ENCODE measurements at regions of chr17 and their contacts with region 1.

Region 1: GRCh38 chr17:58577642-58578091 is 63.2 kb upstream of the MTMR4 start:
- DNase-seq: peak; percentile 15 to 64 (median 30)
- H3K4me3 ChIP-seq: no peak overlapping the region
- H3K4me3 Mint-ChIP-seq: peak overlapping the region in 1 of 7 donors; percentile 29
- H3K27ac ChIP-seq: no peak overlapping the region
- H3K27ac Mint-ChIP-seq: no peak overlapping the region
- H3K4me1 ChIP-seq: no peaks in the 10 kb centered on the region
- H3K4me1 Mint-ChIP-seq: peaks cover 0 to 3% (median 0%) of the 10 kb centered on the region in 3 donors
- H3K27me3 ChIP-seq: no peaks in the 10 kb centered on the region
- H3K27me3 Mint-ChIP-seq: peaks cover 3 to 5% of the 10 kb centered on the region in 2 donors

Region 2: DNA sequence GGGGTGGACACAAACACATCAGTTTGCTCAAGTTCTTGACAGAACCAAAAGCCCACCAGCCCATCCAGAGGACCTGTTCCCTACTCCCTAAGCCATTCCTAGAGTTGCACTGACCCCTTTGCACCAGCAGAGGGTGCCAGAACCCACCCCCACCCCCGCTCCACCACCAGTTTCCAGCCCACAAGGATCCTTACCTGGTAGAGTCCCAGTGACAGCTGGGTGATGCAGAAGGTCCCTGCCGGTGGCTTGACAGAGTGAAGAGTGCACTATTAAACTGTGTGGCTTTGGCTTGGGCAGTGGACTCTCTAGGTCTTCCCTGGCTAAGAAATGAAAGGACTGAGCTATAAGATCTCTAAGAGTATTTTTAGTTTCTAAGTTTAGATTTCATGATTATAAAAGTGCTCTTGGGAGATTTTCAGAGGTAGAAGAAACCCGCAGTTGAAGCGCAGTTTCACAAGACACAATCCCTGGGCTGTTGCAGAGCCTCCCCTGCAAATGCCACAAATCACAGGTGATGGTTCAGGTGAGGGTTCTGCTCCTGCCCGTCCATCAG is 10.1 kb after region 1 on chr17:
- CTCF ChIA-PET with region 1: interaction called, 12 read pairs
- POLR2A ChIA-PET with region 1: no interaction called
- DNase-seq: peak; percentile 32 to 70 (median 36)
- H3K4me3 ChIP-seq: no peak overlapping the region
- H3K4me3 Mint-ChIP-seq: peak overlapping the region in 1 of 7 donors; percentile 41
- H3K27ac ChIP-seq: no peak overlapping the region
- H3K27ac Mint-ChIP-seq: peak overlapping the region in 2 of 8 donors; percentile 23 to 24
- H3K4me1 ChIP-seq: no peaks in the 10 kb centered on the region
- H3K4me1 Mint-ChIP-seq: peaks cover 0 to 5% (median 4%) of the 10 kb centered on the region in 3 donors
- H3K27me3 ChIP-seq: no peaks in the 10 kb centered on the region
- H3K27me3 Mint-ChIP-seq: peaks cover 0 to 11% of the 10 kb centered on the region in 2 donors

Region 3: DNA sequence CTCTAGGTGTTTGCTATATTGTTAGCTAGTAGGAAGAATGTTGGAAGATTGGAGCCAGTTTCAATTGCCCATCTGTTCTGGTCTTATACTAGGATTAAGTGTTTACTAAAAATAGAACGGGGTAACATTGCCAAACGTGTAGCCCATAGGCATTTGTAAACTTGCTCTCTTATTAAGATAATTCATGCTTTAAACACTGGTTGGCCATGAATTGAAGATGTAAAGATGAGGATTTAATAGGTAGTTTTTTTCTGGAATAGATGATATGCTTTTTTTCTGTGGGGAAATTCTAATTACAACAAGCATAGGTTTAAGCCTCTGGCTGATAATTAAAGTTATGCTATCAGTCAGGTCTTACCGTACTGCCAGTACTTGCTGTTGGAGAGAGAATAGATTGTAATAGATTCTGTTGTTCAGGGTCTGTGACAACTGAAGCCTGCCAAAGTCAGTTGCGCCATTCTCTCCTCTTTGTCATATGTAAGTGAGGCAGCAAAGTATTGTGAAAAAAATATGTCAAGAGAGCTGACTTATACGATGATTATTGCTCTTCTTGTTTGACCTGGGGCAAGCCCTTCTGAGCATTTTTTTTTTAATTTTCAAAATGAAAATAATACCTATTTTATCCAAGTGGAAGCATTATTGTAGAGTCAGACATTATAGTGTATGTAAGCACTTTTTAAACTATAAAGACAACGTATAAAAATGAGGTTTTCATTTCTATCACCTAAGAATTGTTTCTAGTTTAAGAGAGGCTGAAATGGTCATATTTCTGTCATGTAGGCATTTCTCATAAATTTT is 245.0 kb after region 1 on chr17:
- CTCF ChIA-PET with region 1: no interaction called
- POLR2A ChIA-PET with region 1: no interaction called
- DNase-seq: no peak
- H3K4me3 ChIP-seq: no peak overlapping the region
- H3K4me3 Mint-ChIP-seq: no peak overlapping the region
- H3K27ac ChIP-seq: no peak overlapping the region
- H3K27ac Mint-ChIP-seq: no peak overlapping the region
- H3K4me1 ChIP-seq: no peaks in the 10 kb centered on the region
- H3K4me1 Mint-ChIP-seq: no peaks in the 10 kb centered on the region
- H3K27me3 ChIP-seq: no peaks in the 10 kb centered on the region
- H3K27me3 Mint-ChIP-seq: peaks cover 2 to 20% of the 10 kb centered on the region in 2 donors

Region 4: GRCh38 chr17:59004338-59005111 is 426.9 kb after region 1 on chr17:
- CTCF ChIA-PET with region 1: interaction called, 13 read pairs
- POLR2A ChIA-PET with region 1: interaction called, 3 read pairs
- DNase-seq: peak; percentile 46 to 74 (median 57)
- H3K4me3 ChIP-seq: no peak overlapping the region
- H3K4me3 Mint-ChIP-seq: peak overlapping the region in 1 of 7 donors; percentile 15
- H3K27ac ChIP-seq: no peak overlapping the region
- H3K27ac Mint-ChIP-seq: peak overlapping the region; percentile 66 to 94 (median 82)
- H3K4me1 ChIP-seq: peaks cover 9% of the 10 kb centered on the region
- H3K4me1 Mint-ChIP-seq: peaks cover 13 to 19% (median 17%) of the 10 kb centered on the region in 3 donors
- H3K27me3 ChIP-seq: no peaks in the 10 kb centered on the region
- H3K27me3 Mint-ChIP-seq: no peaks in the 10 kb centered on the region

Measured in CD8-positive, alpha-beta memory T cell (primary cell).